Heart right ventricle (tissue), 16 donors: ENCODE measurements at regions of chr1 and their contacts with region 1.

Region 1: GRCh38 chr1:32394141-32394889 is at the start of gene BSDC1:
- DNase-seq: peak; percentile 98 to 99
- ATAC-seq: peak; percentile 98 to 99 (median 99)
- H3K4me3 ChIP-seq: peak within 1 kb of the TSS; percentile 59 to 90 (median 86)
- H3K27ac ChIP-seq: peak within 1 kb of the TSS; percentile 84 to 97 (median 92)
- H3K4me1 ChIP-seq: peaks cover 7 to 48% (median 33%) of the 10 kb centered on the region in 9 donors
- H3K27me3 ChIP-seq: no peaks in the 10 kb centered on the region
- CTCF ChIP-seq: peak in 1 of 9 donors; percentile 8
- total RNA-seq, gene BSDC1: 37.2 to 49.4 (median 45.9) TPM

Region 2: GRCh38 chr1:32215629-32216480 is 178.5 kb before region 1 on chr1:
- intact Hi-C with region 1: loop called in 1 of 10 experiments (anchors 10 kb)
- DNase-seq: peak; percentile 44 to 58
- ATAC-seq: peak; percentile 65 to 85 (median 78)
- H3K4me3 ChIP-seq: no peak overlapping the region
- H3K27ac ChIP-seq: peak overlapping the region in 5 of 10 donors; percentile 11 to 41 (median 19)
- H3K4me1 ChIP-seq: peaks cover 2 to 20% (median 9%) of the 10 kb centered on the region in 9 donors
- H3K27me3 ChIP-seq: no peaks in the 10 kb centered on the region
- CTCF ChIP-seq: peak; percentile 41 to 85 (median 78)

Region 3: DNA sequence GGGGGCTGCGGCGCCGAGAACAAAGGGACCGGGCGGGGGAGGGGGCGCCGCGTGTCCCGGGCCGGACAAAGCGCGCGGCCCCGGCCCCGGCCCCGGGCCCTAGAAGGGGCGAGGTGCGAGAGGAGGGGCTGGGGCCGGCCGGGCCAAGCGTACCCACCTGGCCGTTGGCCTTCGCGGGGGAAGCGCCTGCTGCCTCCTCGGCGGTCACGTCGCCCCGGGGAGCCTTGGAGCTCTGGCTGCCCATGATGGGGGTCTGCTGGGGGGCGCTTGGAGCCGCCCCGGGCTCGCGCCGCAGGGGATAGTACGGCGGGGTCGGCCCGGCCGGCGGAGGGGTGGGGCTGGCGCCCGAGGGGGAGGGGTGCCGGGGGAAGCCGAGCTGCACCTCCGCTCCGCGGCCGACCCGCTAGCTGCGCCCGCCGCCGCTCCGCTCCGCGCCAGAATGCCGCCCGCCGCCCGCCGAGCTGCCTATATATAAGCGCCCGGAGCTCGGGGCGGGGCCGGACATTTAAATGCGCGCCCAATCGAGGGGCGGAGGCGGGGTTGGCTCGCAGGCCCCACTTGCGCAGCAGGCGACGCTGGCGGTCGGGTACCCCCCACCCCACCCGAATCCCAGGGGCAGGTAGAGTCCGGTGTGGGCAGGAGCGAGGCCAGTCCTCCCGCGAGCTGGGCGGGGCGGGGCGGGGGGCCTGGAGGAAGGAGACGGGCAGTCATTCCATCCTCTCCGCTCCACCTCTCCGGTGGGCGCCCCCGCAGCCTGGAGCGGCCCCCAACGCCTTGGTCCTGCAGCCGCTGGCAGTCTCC is 58.3 kb before region 1 on chr1 and contains the start of gene MARCKSL1:
- intact Hi-C with region 1: loop called in 1 of 10 experiments (anchors 5 kb)
- DNase-seq: peak; percentile 84 to 87
- ATAC-seq: peak; percentile 63 to 78 (median 74)
- H3K4me3 ChIP-seq: peak within 1 kb of the TSS; percentile 50 to 81 (median 72)
- H3K27ac ChIP-seq: peak within 1 kb of the TSS in 9 of 10 donors; percentile 62 to 89 (median 85)
- H3K4me1 ChIP-seq: peaks cover 0 to 58% (median 44%) of the 10 kb centered on the region in 9 donors
- H3K27me3 ChIP-seq: peaks cover 0 to 11% (median 0%) of the 10 kb centered on the region in 7 donors
- CTCF ChIP-seq: no peak
- total RNA-seq, gene MARCKSL1: 6.3 to 27.4 (median 13.2) TPM

Region 4: DNA sequence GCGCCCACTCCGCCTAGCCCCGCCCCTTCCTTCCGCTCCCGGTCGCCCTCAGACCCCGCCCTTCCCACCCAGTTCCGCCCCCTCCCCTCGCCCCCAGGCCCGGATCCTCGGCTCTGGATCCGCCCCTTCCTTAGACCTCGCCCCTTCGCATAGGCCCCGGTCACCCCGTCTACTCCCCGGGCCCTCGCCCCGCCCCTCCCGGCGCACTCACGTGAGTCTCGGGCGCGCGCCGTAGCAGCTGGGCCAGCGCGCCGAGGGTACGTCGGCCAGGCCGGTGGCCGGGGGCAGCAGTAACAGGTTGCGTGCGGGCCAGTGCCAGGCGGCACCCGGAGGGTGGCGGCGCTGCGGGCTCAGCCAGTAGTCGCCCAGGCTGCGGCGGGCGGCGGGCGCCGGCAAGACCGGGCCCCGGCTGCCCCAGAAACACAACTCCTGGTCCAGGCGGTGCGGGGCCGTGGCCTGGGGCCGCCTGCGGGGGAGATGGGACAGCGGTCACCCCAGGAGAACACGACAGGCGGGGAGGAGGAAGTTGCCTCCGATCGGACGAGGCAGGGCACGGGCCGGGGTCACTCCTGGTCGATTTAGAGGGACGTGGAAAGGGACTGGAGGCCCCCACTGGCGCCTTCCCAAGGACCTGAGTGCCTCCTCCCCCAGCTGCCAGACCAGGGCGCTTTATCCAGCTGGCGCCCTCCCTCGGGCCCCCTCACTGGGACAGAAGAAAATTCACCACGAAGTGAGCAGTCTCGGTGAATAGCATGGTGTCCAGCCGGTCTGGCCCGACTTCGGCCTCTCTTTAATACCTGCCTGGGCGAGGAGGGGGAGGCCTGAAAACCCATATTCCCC is 42.7 kb before region 1 on chr1:
- intact Hi-C with region 1: loop called in 1 of 10 experiments (anchors 5 kb)
- DNase-seq: peak; percentile 94 to 96
- ATAC-seq: peak; percentile 90 to 95 (median 92)
- H3K4me3 ChIP-seq: peak overlapping the region; percentile 57 to 84 (median 75)
- H3K27ac ChIP-seq: peak overlapping the region; percentile 85 to 98 (median 95)
- H3K4me1 ChIP-seq: peaks cover 11 to 64% (median 54%) of the 10 kb centered on the region in 9 donors
- H3K27me3 ChIP-seq: peaks cover 0 to 3% (median 0%) of the 10 kb centered on the region in 7 donors
- CTCF ChIP-seq: peak in 1 of 9 donors; percentile 5

Region 5: DNA sequence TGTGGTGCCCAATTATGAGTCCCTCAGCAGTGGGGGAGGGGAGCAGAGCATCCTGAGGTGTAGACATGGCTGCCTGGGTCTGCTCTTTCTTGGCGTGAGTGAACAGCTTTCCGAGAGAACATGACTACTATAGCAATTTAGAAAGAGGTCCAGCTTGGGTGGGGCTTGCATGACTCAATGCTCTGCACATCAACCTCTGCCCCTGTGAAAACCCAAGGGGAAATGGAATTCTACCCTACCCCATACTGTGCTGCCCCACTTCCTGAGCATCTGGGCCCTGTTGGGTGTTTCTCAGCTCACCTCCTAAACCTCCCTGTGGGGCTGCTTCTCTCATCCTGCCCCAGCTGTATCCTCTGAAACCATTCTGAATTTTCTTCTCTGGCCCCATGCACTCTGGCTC is 678.4 kb after region 1 on chr1:
- intact Hi-C with region 1: loop called in 1 of 10 experiments (anchors 10 kb)
- DNase-seq: peak in 1 of 2 donors; percentile 20
- ATAC-seq: peak in 7 of 8 donors; percentile 34 to 91 (median 76)
- H3K4me3 ChIP-seq: no peak overlapping the region
- H3K27ac ChIP-seq: peak overlapping the region in 1 of 10 donors; percentile 43
- H3K4me1 ChIP-seq: no peaks in the 10 kb centered on the region
- H3K27me3 ChIP-seq: no peaks in the 10 kb centered on the region
- CTCF ChIP-seq: no peak

Region 6: DNA sequence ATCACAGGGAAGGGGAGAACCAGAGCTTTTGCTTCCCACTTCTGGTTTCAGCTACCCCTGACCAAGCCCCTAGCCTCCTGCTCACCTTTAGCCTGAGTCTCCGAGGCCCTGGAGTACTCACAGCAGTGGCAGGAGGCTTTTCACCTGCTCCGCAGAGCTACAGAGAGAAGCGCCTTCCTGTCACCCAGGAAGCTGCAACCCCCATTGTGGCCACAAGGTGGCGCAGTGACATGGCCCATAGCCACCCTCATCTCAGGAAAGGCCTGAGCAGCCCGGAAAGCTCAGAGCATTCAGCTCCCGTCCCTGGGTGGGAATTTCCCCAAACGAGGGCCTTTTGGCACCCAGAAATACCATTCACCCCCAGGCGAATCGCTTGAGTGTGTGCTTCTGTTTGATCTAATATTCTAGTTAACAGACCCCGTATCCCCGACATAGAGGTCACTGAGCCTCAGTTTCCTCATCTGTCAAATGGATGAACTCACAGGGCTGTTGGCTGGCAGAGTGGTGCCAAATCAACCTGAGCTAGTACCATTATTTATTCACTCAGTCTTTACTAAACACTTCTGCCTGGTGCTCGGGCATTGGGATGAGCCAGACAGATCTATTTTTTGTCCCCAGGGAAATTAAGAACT is 901.3 kb after region 1 on chr1:
- intact Hi-C with region 1: no loop called
- DNase-seq: peak; percentile 85 to 89
- ATAC-seq: peak; percentile 73 to 93 (median 84)
- H3K4me3 ChIP-seq: no peak overlapping the region
- H3K27ac ChIP-seq: peak overlapping the region in 4 of 10 donors; percentile 13 to 24 (median 15)
- H3K4me1 ChIP-seq: peaks cover 0 to 27% (median 17%) of the 10 kb centered on the region in 9 donors
- H3K27me3 ChIP-seq: no peaks in the 10 kb centered on the region
- CTCF ChIP-seq: peak; percentile 88 to 99 (median 96)